ENCODE measurements at regions of chr1 and their contacts with region 1.

Region 1: GRCh38 chr1:155961937-155962336 is 16.4 kb downstream of the ARHGEF2 start:
- DNase-seq: peak; percentile 88

Region 2: DNA sequence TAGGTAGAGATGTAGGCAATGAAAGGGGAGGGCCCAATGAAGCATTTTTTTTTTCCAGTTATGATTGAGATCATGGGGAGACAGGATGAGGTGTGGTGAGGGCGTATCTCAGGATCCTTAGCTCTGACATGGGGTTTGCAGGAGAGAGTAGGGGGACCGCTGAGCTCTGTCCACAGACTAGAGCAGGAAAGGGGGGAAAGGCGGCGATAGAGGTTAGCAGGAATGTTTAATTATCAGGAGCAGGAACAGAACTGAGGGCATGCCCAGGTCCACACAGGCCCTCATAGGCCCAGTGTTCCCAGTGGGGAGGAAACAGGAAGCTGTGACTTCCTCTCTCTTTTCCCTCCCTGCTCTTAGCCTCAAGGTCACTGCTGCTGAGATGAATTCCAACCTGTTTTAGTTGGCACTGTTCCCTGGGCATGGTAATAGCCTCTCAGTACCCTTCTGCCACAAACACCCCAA is 21.4 kb before region 1 on chr1:
- intact Hi-C with region 1: loop called (anchors 2 kb)
- DNase-seq: no peak

Measured in cardiac septum (tissue), 1 donor.